BJ (cell line): ENCODE measurements at regions of chr17 and their contacts with region 1.

Region 1: GRCh38 chr17:2814481-2815341 is 18.5 kb downstream of the RAP1GAP2 start:
- DNase-seq: no peak
- H3K4me3 ChIP-seq: no peak overlapping the region
- H3K27me3 ChIP-seq: no peaks in the 10 kb centered on the region; the same call in 1 of the 2 replicates
- CTCF ChIP-seq: no peak

Region 2: DNA sequence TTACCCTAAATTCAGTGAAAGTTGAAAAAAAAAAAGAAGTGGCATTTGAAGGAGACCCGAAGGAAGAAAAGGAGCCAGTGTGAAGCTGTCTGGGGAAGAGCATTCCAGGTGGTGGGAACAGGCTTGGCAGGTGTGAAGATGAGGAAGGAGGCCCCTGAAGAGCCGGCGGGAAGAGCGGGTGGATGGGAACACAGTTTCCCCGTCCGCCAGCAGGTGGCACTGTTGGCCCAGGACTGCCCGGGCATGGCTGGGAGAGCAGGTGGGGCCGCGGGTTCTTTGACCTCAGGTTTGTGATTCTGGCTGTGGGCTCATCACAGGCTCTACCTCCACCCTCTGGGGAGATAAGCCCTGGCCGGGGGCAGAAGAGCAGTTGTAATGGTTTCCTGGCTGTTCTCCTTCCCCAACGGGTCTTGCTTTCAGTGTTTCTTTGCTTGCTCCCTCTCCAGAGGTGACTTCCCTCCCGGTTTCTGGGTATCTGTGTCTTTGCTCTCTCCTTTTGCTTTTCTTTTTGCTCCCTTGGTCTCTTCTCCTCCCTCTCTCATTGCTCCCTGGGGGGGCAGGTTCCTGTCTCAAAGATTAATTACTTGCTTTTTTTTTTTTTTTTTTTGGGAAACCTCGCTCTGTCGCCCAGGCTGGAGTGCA is 13.8 kb after region 1 on chr17:
- CTCF ChIA-PET with region 1: interaction called, 13 read pairs
- POLR2A ChIA-PET with region 1: no interaction called
- DNase-seq: no peak
- H3K4me3 ChIP-seq: no peak overlapping the region
- H3K27me3 ChIP-seq: no peaks in the 10 kb centered on the region
- CTCF ChIP-seq: peak; percentile 95